ENCODE measurements at regions of chrX and their contacts with region 1.

Region 1: DNA sequence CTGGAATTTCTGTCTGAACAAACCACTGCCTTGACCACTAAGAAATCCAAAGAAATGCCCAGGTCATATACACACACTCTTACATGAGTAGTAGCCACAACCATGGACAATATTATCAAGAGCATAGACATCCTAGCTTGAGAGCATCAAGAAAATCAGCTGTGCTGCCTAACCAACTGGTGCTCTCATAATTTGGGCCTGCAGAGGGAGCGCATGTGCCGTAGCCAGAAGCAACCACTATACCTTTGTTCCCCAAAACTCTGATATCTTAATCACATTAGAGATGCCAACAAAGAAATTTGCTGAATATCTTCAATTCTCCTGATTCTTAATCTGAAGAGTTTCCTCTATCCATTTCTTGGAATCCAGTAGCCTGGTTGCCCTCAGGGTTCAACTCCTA is 163.6 kb downstream of the ZNF674 start:
- DNase-seq: peak; percentile 11
- H3K4me3 ChIP-seq: no peak overlapping the region
- H3K27ac ChIP-seq: no peak overlapping the region
- H3K4me1 ChIP-seq: no peaks in the 10 kb centered on the region
- H3K27me3 ChIP-seq: no peaks in the 10 kb centered on the region
- CTCF ChIP-seq: peak; percentile 65 to 72

Region 2: GRCh38 chrX:46244451-46244850 is 137.2 kb before region 1 on chrX:
- CTCF ChIA-PET with region 1: no interaction called
- dilution Hi-C with region 1: no loop called
- in situ Hi-C with region 1: no loop called
- intact Hi-C with region 1: no loop called
- DNase-seq: no peak
- H3K4me3 ChIP-seq: no peak overlapping the region
- H3K27ac ChIP-seq: no peak overlapping the region
- H3K4me1 ChIP-seq: no peaks in the 10 kb centered on the region
- H3K27me3 ChIP-seq: peaks cover 4% of the 10 kb centered on the region
- CTCF ChIP-seq: no peak

Region 3: DNA sequence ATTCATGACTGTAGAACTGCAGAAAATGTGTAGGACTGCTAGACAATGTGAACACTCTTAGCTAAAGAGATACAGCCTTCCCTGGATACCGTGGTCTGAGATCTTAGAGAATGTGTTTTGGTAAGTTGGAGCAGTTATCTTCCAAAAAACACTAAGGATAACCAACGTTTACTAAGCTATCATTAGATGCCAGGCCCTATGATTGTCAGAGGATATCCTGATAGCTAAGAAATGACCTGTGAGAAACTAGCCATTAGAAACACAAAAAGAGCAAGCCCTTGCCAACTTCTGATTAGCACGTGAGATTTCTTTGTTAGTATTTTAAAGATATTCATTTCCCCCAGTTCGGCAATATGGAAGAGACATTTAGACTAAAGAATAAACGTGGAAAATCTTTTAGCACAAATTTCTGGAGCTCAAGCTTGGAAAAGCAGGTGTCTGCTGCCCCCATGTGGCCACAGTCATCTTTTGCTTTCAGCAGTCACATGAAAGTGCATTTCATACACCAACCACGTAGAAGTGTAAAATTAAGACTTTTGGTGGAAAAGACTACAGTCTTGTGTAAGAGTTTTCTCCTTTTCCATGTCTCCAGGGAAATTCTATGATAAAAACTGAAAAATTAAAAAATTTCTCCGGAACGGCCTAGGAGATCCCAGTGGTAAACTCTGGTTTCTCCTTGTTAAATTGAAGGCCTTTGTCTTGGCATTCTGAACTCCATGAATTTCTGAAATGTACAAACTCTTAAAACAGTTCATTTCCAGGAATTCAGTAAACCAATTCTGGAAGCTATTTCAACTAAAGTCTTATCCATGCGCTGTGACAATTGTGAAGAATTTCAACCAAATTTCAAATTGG is 27.1 kb after region 1 on chrX:
- CTCF ChIA-PET with region 1: interaction called, 3 read pairs
- dilution Hi-C with region 1: no loop called
- in situ Hi-C with region 1: no loop called
- intact Hi-C with region 1: loop called (anchors 1 kb)
- DNase-seq: peak; percentile 39
- H3K4me3 ChIP-seq: no peak overlapping the region
- H3K27ac ChIP-seq: no peak overlapping the region
- H3K4me1 ChIP-seq: peaks cover 5% of the 10 kb centered on the region
- H3K27me3 ChIP-seq: no peaks in the 10 kb centered on the region
- CTCF ChIP-seq: peak; percentile 88 to 92

Region 4: GRCh38 chrX:46642145-46642544 is 260.5 kb after region 1 on chrX:
- CTCF ChIA-PET with region 1: no interaction called
- dilution Hi-C with region 1: no loop called
- in situ Hi-C with region 1: no loop called
- intact Hi-C with region 1: loop called (anchors 5 kb)
- DNase-seq: peak; percentile 12
- H3K4me3 ChIP-seq: no peak overlapping the region
- H3K27ac ChIP-seq: no peak overlapping the region
- H3K4me1 ChIP-seq: no peaks in the 10 kb centered on the region
- H3K27me3 ChIP-seq: no peaks in the 10 kb centered on the region
- CTCF ChIP-seq: peak; percentile 28 to 44